ENCODE measurements at regions of chr19 and their contacts with region 1.

Region 1: DNA sequence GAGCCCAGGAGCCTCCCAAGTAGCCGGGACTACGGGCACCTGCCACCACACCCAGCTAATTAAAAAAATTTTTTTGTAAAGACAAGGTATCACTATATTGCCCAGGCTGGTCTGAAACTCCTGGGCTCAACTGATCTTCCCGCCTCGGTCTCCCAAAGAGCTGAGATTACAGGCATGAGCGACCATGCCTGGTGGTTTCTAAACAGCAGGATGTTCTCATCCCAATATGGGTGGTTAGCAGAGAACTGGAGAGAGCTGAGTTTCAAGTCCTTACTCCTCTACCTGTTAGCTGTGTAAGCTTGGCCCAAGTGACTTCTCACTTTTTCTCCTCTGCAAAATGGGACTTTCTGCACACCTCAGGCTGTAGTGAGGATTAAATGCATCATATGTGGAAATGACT is 8.0 kb downstream of the TMEM91 start:
- DNase-seq: no peak
- ATAC-seq: no peak
- H3K4me3 ChIP-seq: no peak overlapping the region
- H3K27ac ChIP-seq: no peak overlapping the region
- H3K4me1 ChIP-seq: no peaks in the 10 kb centered on the region
- H3K27me3 ChIP-seq: no peaks in the 10 kb centered on the region
- CTCF ChIP-seq: no peak

Region 2: DNA sequence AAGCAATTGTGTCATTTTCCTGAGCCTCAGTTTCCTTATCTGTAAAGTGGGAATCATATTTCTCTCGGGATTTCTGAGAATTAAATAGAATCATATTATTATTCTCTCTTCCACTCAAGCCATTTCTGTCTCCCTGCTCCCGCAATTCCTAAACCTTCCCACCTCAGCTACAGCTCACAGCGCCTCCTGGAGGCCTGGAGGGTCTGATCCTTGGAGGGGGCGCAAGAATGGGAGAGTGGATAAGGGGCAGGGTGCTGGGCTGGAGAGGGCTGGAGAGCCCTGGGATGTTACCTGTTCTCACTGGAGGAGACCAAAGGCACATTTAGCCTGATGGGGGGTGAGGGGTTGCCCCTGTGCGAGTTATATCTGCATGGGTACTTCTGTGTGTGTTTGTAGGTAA is 222.4 kb before region 1 on chr19:
- intact Hi-C with region 1: no loop called
- DNase-seq: no peak
- ATAC-seq: no peak
- H3K4me3 ChIP-seq: no peak overlapping the region
- H3K27ac ChIP-seq: no peak overlapping the region
- H3K4me1 ChIP-seq: no peaks in the 10 kb centered on the region
- H3K27me3 ChIP-seq: no peaks in the 10 kb centered on the region
- CTCF ChIP-seq: no peak

Region 3: GRCh38 chr19:41327576-41328156 is 56.7 kb before region 1 on chr19:
- intact Hi-C with region 1: no loop called
- DNase-seq: peak; percentile 82 to 85
- ATAC-seq: peak; percentile 54 to 72 (median 64)
- H3K4me3 ChIP-seq: peak overlapping the region; percentile 53
- H3K27ac ChIP-seq: peak overlapping the region; percentile 72
- H3K4me1 ChIP-seq: peaks cover 52% of the 10 kb centered on the region
- H3K27me3 ChIP-seq: no peaks in the 10 kb centered on the region
- CTCF ChIP-seq: no peak

Region 4: DNA sequence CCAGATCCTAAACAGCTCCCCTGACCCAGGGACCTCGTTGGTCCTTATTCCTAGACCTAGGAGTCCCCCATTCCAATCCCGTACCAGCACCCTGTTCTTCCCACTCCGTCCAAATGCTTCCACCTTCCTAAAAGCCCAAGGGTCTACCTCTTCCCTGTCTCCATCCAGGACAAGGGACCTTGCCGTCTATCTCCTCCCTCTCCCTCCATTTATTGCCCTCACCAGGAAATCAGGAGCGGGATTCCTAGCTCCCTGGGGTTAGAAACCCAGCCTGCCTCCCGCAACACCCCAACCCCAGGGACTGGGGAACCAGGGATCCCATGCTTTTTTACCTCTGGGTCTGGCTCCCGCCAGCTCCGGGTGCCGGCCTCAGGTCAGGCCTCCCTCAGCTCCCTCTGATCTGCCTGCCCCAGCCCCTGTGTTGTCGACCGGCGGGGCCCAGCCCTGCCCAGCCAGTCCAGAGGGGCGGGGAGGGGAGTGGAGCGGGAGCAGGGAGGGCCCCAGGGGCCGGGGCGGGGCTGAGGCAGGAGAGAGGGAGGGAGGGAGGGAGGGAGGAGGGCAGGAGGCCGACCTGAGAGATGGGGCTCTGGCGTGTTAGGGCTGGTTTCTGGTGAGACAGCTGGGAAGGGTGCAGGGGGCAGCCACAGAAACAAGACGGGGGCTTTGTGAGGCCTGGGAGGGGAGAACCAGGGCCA is 42.7 kb after region 1 on chr19 and contains the start of gene B3GNT8:
- intact Hi-C with region 1: loop called in 1 of 2 experiments (anchors 5 kb)
- DNase-seq: peak; percentile 86 to 87
- ATAC-seq: peak; percentile 19 to 59 (median 42)
- H3K4me3 ChIP-seq: peak within 1 kb of the TSS; percentile 64
- H3K27ac ChIP-seq: peak within 1 kb of the TSS; percentile 72
- H3K4me1 ChIP-seq: peaks cover 16% of the 10 kb centered on the region
- H3K27me3 ChIP-seq: no peaks in the 10 kb centered on the region
- CTCF ChIP-seq: no peak
- total RNA-seq, gene B3GNT8: 0.55 to 1.9 (median 1.3) TPM

Region 5: GRCh38 chr19:41449079-41449864 is 64.9 kb after region 1 on chr19:
- intact Hi-C with region 1: no loop called
- DNase-seq: peak; percentile 79 to 84
- ATAC-seq: peak; percentile 76 to 92 (median 88)
- H3K4me3 ChIP-seq: peak overlapping the region; percentile 52
- H3K27ac ChIP-seq: no peak overlapping the region
- H3K4me1 ChIP-seq: peaks cover 5% of the 10 kb centered on the region
- H3K27me3 ChIP-seq: peaks cover 0 to 3% (median 0%) of the 10 kb centered on the region in 3 donors
- CTCF ChIP-seq: peak; percentile 96